ENCODE measurements at regions of chr11 and their contacts with region 1.

Region 1: DNA sequence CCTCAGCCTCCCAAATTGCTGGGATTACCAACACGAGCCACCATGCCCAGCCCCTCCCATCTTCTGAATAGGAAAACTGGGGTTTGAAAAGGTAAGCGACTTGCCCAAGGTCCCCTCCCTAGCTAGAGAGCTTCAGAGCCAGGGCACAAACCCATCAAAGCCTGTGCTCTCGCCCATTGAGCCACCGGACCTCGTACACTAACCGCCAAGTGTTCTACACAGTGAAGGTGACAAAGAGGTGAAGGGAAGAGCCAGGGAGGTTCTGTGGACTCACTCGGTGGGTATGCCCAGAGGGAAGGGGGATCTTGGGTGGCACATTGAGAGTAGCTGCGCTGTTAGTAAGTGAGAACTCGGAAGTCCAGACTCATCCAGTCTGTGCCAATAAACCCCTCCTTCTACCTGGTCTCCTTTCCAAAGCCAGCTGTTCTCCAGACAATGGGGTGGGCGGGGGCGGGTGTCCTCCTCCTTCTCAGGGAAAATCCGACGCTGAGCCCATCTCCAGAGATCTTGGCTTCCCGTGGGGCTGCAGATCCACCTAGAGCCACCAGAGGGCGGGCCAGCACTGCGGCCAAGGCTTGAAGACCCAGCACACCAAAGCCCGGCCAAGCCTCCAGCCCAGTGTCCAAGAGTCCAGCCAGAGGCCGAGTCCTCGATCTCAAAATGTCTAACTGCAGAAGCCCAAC is 3.2 kb upstream of the RTN4RL2 start:
- DNase-seq: peak; percentile 63 to 70 (median 64)
- H3K4me3 ChIP-seq: peak overlapping the region in 2 of 7 experiments; percentile 12 to 43
- H3K27ac ChIP-seq: no peak overlapping the region
- H3K4me1 ChIP-seq: peaks cover 0 to 41% (median 36%) of the 10 kb centered on the region in 4 experiments
- H3K27me3 ChIP-seq: peaks cover 3 to 46% (median 18%) of the 10 kb centered on the region in 5 experiments

Region 2: DNA sequence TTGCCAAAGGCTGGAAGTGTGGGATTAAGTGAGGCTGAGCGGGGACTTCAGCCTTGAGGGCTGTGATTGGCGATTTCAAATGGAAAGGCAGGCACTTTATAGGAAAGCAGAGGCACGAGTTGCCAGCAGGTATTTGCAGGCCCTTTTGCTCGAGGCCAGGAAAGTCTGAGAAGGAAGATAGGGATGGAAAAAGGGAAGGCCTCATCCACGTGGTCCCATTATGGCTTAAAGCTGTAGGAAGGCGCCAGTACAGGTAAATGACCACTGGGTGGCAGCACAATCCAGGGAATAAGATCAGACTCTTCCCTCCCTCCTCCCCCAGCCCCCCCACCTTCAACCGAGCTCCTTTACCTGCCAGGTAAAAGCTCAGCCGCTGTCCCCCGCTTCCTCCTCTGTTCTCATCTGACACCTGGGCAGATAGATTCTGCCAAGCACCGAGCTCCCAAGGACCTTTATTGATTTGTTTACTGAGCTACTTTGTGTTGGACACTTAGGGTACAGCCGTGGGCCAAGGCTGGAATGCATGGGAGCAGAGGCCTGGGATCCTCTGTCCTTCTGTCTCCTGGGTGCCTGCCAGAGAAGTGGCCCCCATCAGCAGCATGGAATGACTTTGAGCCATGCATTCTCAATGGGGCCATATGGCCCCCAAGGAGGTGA is 111.4 kb before region 1 on chr11:
- CTCF ChIA-PET with region 1: interaction called, 46 read pairs
- POLR2A ChIA-PET with region 1: interaction called, 4 read pairs
- DNase-seq: peak; percentile 60 to 71 (median 61)
- H3K4me3 ChIP-seq: no peak overlapping the region
- H3K27ac ChIP-seq: no peak overlapping the region
- H3K4me1 ChIP-seq: peaks cover 0 to 11% (median 2%) of the 10 kb centered on the region in 4 experiments
- H3K27me3 ChIP-seq: no peaks in the 10 kb centered on the region

Region 3: DNA sequence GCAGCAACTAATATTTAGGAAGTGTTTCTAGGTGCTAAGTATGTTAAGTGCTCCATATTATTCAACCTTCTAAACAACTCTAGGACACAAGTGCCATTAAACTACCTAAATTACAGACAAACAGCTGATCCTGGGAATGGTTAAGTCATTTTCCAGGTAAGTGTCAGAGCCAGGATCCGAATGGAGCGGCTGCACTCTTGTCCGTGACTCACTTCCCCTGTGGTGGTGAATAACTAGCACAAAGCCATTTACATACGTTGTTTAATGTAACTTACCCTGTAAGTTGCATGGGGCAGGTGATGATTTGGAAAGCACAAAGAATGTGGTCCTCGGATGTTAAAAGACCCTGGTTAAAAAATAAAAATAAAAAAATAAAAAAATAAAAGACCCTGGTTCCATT is 57.9 kb before region 1 on chr11:
- CTCF ChIA-PET with region 1: no interaction called
- POLR2A ChIA-PET with region 1: no interaction called
- DNase-seq: no peak
- H3K4me3 ChIP-seq: no peak overlapping the region
- H3K27ac ChIP-seq: no peak overlapping the region
- H3K4me1 ChIP-seq: peaks cover 0 to 22% (median 1%) of the 10 kb centered on the region in 4 experiments
- H3K27me3 ChIP-seq: no peaks in the 10 kb centered on the region

Region 4: GRCh38 chr11:57426929-57427726 is 30.0 kb before region 1 on chr11 and contains the start of gene SLC43A3:
- CTCF ChIA-PET with region 1: interaction called, 48 read pairs
- POLR2A ChIA-PET with region 1: interaction called, 4 read pairs
- DNase-seq: peak; percentile 72 to 90 (median 84)
- H3K4me3 ChIP-seq: peak within 1 kb of the TSS in 6 of 7 experiments; percentile 54 to 81 (median 71)
- H3K27ac ChIP-seq: peak within 1 kb of the TSS; percentile 69 to 82
- H3K4me1 ChIP-seq: peaks cover 13 to 62% (median 46%) of the 10 kb centered on the region in 4 experiments
- H3K27me3 ChIP-seq: no peaks in the 10 kb centered on the region

Region 5: GRCh38 chr11:57444362-57445121 is 12.6 kb before region 1 on chr11:
- CTCF ChIA-PET with region 1: interaction called, 62 read pairs
- POLR2A ChIA-PET with region 1: interaction called, 3 read pairs
- DNase-seq: peak in 2 of 3 donors; percentile 38 to 45
- H3K4me3 ChIP-seq: no peak overlapping the region
- H3K27ac ChIP-seq: no peak overlapping the region
- H3K4me1 ChIP-seq: no peaks in the 10 kb centered on the region
- H3K27me3 ChIP-seq: no peaks in the 10 kb centered on the region

Region 6: GRCh38 chr11:57487920-57488659 is 31.0 kb after region 1 on chr11:
- CTCF ChIA-PET with region 1: interaction called, 211 read pairs
- POLR2A ChIA-PET with region 1: no interaction called
- DNase-seq: no peak
- H3K4me3 ChIP-seq: no peak overlapping the region
- H3K27ac ChIP-seq: no peak overlapping the region
- H3K4me1 ChIP-seq: peaks cover 18 to 31% (median 23%) of the 10 kb centered on the region in 4 experiments
- H3K27me3 ChIP-seq: no peaks in the 10 kb centered on the region

Region 7: GRCh38 chr11:57530596-57531507 is 73.8 kb after region 1 on chr11 and contains the start of gene TIMM10:
- CTCF ChIA-PET with region 1: interaction called, 99 read pairs
- POLR2A ChIA-PET with region 1: no interaction called
- DNase-seq: peak; percentile 97 to 98 (median 98)
- H3K4me3 ChIP-seq: peak within 1 kb of the TSS; percentile 62 to 96 (median 85)
- H3K27ac ChIP-seq: peak within 1 kb of the TSS; percentile 67 to 88
- H3K4me1 ChIP-seq: peaks cover 7 to 32% (median 19%) of the 10 kb centered on the region in 4 experiments
- H3K27me3 ChIP-seq: no peaks in the 10 kb centered on the region

Region 8: GRCh38 chr11:57873196-57873911 is 416.3 kb after region 1 on chr11:
- CTCF ChIA-PET with region 1: no interaction called
- POLR2A ChIA-PET with region 1: no interaction called
- DNase-seq: peak in 2 of 3 donors; percentile 1 to 17
- H3K4me3 ChIP-seq: no peak overlapping the region
- H3K27ac ChIP-seq: no peak overlapping the region
- H3K4me1 ChIP-seq: no peaks in the 10 kb centered on the region
- H3K27me3 ChIP-seq: no peaks in the 10 kb centered on the region

Measured in common myeloid progenitor, CD34-positive (primary cell).